ENCODE measurements at regions of chr4 and their contacts with region 1.

Region 1: DNA sequence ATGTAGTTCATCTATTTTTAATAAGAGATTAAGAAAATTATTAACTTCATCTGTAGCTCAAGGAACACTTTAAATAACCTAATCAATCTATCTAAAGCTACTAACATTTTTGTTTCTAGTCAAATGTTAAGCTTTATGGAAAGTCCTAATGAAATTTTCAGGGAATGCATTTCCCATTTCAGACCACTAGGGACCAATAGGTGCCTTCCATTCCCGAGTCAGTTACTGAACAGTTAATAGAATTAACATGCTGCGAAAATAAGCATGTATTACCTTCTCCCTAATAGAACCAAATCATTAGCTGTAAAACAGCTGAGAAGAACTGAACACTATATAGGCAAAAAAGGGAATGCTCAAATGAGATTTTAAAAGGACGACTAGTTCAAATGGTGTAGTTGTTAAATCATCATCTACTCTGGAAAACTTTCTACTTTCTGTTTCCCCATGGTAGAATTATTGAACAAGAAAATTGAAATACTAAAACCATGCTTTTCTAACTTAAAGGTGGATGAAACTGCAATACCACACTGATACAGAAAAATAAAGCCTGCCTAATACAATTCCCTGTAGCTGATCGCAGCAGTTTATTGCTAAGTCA is 22.5 kb downstream of the STX18 start:
- DNase-seq: no peak
- H3K4me3 ChIP-seq: no peak overlapping the region
- H3K27me3 ChIP-seq: no peaks in the 10 kb centered on the region
- CTCF ChIP-seq: peak; percentile 68

Region 2: DNA sequence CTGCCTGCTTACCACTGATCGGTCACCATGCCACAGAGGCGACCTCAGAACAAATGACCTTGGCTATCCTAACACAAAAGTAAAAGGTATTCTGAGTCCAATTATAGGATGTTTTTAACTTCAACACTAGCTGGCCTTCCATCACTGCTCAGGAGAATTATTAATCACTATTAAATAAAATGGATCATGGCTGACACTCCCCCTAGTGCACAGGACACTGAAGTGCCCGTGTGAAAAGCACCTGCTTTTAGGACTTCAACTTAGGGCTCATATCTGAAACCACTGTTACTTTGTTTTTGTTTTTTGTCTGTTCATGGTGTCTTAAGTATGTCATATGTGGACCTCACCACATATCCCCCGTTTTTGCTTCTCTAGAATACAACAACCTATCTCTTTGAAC is 11.5 kb before region 1 on chr4:
- CTCF ChIA-PET with region 1: interaction called, 27 read pairs
- POLR2A ChIA-PET with region 1: no interaction called
- DNase-seq: no peak
- H3K4me3 ChIP-seq: no peak overlapping the region
- H3K27me3 ChIP-seq: no peaks in the 10 kb centered on the region
- CTCF ChIP-seq: peak; percentile 57

Region 3: DNA sequence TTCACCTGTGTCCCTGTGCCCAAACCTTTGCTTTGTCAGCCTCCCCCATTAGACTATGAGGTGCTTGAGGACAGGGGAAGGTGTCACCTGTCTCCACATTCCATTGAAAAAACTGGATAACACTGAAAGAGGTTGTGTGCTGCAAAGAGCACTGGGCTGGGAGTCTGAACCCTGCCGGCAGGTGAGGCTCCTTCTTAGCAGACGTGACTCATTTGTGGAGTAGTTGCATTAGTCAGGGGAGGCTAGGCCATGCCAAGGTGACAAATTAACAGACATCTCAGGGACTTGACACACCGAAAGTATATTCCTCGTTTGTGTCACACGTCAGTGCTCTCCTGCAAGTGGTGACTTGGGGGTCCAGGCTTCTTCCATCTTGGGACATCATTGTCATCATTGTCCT is 118.3 kb after region 1 on chr4:
- CTCF ChIA-PET with region 1: no interaction called
- POLR2A ChIA-PET with region 1: no interaction called
- DNase-seq: no peak
- H3K4me3 ChIP-seq: no peak overlapping the region
- H3K27me3 ChIP-seq: no peaks in the 10 kb centered on the region
- CTCF ChIP-seq: no peak